A549 (cell line): ENCODE measurements at regions of chr11 and their contacts with region 1.

Region 1: DNA sequence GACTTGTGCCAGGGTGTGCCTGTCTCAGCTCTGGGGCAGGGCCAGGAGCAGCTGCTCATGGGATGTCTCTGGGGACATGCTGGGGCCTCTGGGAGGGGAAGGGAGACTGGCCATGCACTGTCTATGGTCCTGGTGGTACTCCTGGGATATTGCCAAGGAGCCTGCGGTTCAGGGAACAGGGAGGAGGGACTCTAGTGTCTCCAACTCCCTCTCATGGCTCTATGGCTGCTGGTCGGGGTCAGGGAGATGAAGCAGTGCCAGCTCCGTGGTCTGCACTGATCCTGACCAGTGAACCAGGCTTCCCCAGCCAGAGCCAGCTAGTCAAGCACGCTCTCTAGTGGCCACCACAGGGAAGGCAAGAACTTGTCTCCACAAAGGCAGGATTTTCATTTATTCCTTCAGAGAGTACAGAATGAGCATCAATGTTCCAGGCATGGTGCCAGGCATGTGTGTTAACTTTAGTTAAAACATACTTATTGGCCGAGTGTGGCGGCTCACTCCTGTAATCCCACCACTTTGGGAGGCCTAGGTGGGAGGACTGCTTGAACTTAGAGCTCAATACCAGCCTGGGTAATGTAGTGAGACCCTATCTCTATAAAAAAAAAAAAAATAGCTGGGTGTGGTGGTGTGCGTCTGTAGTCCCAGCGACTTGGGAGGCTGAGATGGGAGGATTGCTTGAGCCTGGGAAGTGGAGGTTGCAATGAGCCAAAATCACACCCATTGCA is 2.5 kb upstream of the BEST1 start:
- DNase-seq: peak; percentile 82 to 89
- ATAC-seq: peak; percentile 83 to 91
- H3K4me3 ChIP-seq: no peak overlapping the region
- H3K27ac ChIP-seq: peak overlapping the region; percentile 71 to 72
- H3K4me1 ChIP-seq: peaks cover 35% of the 10 kb centered on the region
- CTCF ChIP-seq: peak; percentile 97
- EP300 ChIP-seq: no peak
- POLR2A ChIP-seq: no peak
- RAD21 ChIP-seq: peak; percentile 98 to 99

Region 2: DNA sequence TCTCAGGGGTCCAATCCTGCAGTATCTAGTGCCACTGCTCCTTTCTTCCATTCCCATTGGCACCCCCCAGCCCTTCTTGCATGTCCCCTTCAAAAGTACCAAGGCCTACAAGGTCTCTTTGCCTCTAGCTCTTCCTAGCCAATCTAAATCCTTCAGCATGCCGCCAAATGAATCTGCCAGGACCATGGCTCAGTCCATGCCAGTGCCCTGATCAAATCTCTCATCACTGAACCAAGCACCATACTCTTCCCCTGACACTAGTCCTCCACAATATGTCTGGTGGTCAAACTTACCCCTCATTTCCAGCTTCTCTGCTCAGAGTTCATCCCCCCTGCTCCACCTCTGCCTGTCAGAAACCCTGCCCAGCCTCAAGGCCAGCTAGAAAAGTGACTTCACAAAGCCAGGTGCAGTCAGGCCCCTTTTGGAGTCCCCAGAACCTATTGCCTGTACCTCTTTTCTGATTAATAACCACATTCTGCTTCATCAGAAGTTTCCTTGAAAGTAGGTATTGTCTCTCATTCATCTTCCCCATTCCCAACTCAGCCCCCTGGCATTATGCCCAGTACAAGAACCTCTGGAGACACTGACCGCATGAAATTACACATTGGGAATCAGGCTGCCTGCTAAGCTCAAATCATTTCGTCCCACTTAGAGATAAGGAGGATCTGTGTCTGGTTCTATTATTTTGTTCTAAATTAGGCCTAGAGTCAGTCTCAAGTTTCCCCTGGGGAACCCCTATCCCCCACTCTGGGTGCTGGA is 143.6 kb before region 1 on chr11:
- CTCF ChIA-PET with region 1: interaction called, 95 read pairs
- POLR2A ChIA-PET with region 1: no interaction called
- DNase-seq: no peak
- ATAC-seq: no peak
- H3K4me3 ChIP-seq: no peak overlapping the region
- H3K27ac ChIP-seq: no peak overlapping the region
- H3K4me1 ChIP-seq: peaks cover 32% of the 10 kb centered on the region
- CTCF ChIP-seq: no peak
- EP300 ChIP-seq: no peak
- POLR2A ChIP-seq: no peak
- RAD21 ChIP-seq: no peak

Region 3: GRCh38 chr11:61885166-61885778 is 62.4 kb before region 1 on chr11:
- CTCF ChIA-PET with region 1: interaction called, 94 read pairs
- POLR2A ChIA-PET with region 1: no interaction called
- DNase-seq: no peak
- ATAC-seq: peak; percentile 8 to 26; a peak in 2 of 6 replicates
- H3K4me3 ChIP-seq: no peak overlapping the region
- H3K27ac ChIP-seq: 0 out of 6 replicates have a peak overlapping the region, but pooled peaks of 1 of the 2 experiments have one; percentile 30
- H3K4me1 ChIP-seq: peaks cover 31% of the 10 kb centered on the region
- CTCF ChIP-seq: no peak
- EP300 ChIP-seq: no peak
- POLR2A ChIP-seq: no peak
- RAD21 ChIP-seq: no peak

Region 4: GRCh38 chr11:61923166-61924063 is 24.2 kb before region 1 on chr11:
- CTCF ChIA-PET with region 1: interaction called, 41 read pairs
- POLR2A ChIA-PET with region 1: no interaction called
- DNase-seq: no peak
- ATAC-seq: peak in 1 of 2 experiments; percentile 11; a peak in 2 of 6 replicates
- H3K4me3 ChIP-seq: no peak overlapping the region
- H3K27ac ChIP-seq: peak overlapping the region; percentile 31 to 53; a peak in 4 of 6 replicates
- H3K4me1 ChIP-seq: peaks cover 28% of the 10 kb centered on the region
- CTCF ChIP-seq: no peak
- EP300 ChIP-seq: no peak
- POLR2A ChIP-seq: no peak
- RAD21 ChIP-seq: no peak

Region 5: GRCh38 chr11:61967116-61967923 is 19.7 kb after region 1 on chr11 and contains the start of gene FTH1:
- CTCF ChIA-PET with region 1: interaction called, 101 read pairs
- POLR2A ChIA-PET with region 1: interaction called, 14 read pairs
- DNase-seq: peak; percentile 77 to 95
- ATAC-seq: peak; percentile 16 to 62
- H3K4me3 ChIP-seq: peak within 1 kb of the TSS; percentile 96
- H3K27ac ChIP-seq: peak within 1 kb of the TSS; percentile 97 to 99
- H3K4me1 ChIP-seq: peaks cover 59% of the 10 kb centered on the region
- CTCF ChIP-seq: no peak
- EP300 ChIP-seq: no peak; a peak in 1 of 5 replicates
- POLR2A ChIP-seq: peak; percentile 93
- RAD21 ChIP-seq: peak in 1 of 2 experiments; percentile 44; a peak in 2 of 5 replicates
- polyA plus RNA-seq, gene FTH1: 2,791 and 4,959 TPM in 2 replicates

Region 6: DNA sequence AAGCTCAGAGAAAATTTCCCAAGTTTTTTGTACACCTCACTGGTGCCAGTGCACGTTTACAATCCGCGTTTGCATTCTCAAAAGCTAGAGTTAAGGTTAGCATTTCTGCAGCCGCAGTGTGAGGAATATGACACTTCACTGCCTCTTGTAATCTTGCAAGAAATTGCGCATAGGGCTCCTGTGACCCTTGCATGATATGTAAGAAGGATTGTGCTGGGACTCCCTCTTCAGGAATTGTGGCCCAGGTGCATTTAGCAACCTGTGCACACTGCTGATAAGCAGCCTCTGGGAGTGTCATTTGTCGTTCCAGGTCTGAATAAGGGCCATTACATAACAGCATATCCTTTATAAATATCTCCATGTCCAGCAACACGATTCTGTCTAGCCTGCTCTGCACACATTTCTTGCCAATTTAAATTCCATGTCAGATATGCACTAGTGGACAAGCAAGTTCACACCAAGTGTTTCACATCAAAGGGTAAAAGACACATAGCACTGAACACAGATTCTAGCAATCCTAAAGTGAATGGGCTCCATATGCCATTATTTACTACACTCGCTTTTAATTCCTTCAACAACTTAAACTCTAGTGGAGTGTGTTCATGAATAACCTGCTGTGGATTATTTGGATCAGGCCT is 107.0 kb after region 1 on chr11:
- CTCF ChIA-PET with region 1: interaction called, 61 read pairs
- POLR2A ChIA-PET with region 1: no interaction called
- DNase-seq: peak; percentile 53 to 92
- ATAC-seq: peak; percentile 94 to 99
- H3K4me3 ChIP-seq: no peak overlapping the region
- H3K27ac ChIP-seq: peak overlapping the region; percentile 79 to 87
- H3K4me1 ChIP-seq: peaks cover 16% of the 10 kb centered on the region
- CTCF ChIP-seq: peak; percentile 91
- EP300 ChIP-seq: no peak
- POLR2A ChIP-seq: no peak
- RAD21 ChIP-seq: peak; percentile 97 to 98